Activated T-helper 1 cell treated with anti-CD3 and anti-CD28 coated beads, Interleukin-12 subunit alpha, Interleukin-12 subunit beta, Interleukin-2, Interleukin-4 antibody, amounts not matched to agents 30 ng/mL and 10 ng/mL and 1 ng/mL, durations not matched to agents 14 hours and 24 hours and 36 hours (primary cell): ENCODE measurements at regions of chr6 and their contacts with region 1.

Region 1: DNA sequence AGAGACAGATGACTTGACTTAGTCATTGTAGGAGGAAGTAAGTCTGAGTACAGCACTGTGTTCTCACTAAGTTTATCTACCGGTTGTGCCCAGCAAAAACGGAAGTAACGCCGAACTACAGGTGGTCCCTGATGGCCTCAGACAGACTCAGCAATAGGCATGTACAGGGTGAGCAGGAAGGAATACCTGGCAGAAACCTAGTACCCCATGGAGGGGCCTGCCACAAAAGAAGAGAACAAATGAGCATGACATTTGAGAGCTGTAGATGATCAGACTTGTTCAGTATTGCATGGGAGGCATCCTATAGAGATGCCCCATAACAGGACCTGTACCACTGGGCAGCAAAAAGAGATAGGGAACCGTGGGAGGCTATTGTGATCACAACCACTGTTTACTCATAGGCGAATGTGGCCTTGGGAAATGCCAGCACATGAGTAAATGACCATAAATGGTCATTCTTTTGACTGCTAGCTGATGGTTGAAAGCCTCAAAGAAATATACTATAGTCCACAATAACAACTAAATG is 106.4 kb upstream of the TAB2 start:
- DNase-seq: no peak
- H3K4me3 Mint-ChIP-seq: no peak overlapping the region
- H3K27ac Mint-ChIP-seq: no peak overlapping the region
- H3K4me1 Mint-ChIP-seq: peaks cover 4% of the 10 kb centered on the region
- H3K27me3 Mint-ChIP-seq: no peaks in the 10 kb centered on the region

Region 2: GRCh38 chr6:148271711-148272439 is 939.2 kb before region 1 on chr6:
- intact Hi-C with region 1: no loop called
- DNase-seq: no peak
- H3K4me3 Mint-ChIP-seq: no peak overlapping the region
- H3K27ac Mint-ChIP-seq: no peak overlapping the region
- H3K4me1 Mint-ChIP-seq: no peaks in the 10 kb centered on the region
- H3K27me3 Mint-ChIP-seq: no peaks in the 10 kb centered on the region

Region 3: DNA sequence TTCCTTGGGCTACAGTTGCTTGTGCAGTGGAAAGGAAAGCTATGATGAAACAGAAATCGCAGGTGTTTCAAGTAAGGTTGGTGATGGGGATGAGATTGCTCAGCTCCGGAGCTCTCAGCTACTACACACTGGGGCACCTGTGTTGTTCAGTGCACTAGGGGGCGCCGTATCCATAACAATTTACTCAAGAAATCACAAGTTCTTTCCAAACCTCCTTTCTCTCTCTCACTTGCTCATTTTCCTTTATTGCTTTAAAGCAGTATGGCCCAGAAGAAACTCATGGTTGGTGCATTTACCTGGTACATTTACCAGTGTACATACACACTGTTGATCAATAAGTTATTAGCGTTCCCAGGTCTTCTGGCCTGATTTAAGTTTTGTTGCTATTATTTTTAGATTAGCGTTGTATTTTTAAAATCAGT is 128.8 kb before region 1 on chr6:
- intact Hi-C with region 1: loop called (anchors 1 kb)
- DNase-seq: peak; percentile 81
- H3K4me3 Mint-ChIP-seq: peak overlapping the region; percentile 80
- H3K27ac Mint-ChIP-seq: peak overlapping the region; percentile 92
- H3K4me1 Mint-ChIP-seq: peaks cover 89% of the 10 kb centered on the region
- H3K27me3 Mint-ChIP-seq: no peaks in the 10 kb centered on the region

Region 4: GRCh38 chr6:149147938-149148718 is 63.0 kb before region 1 on chr6:
- intact Hi-C with region 1: loop called (anchors 1 kb)
- DNase-seq: peak; percentile 49
- H3K4me3 Mint-ChIP-seq: peak overlapping the region; percentile 34
- H3K27ac Mint-ChIP-seq: peak overlapping the region; percentile 96
- H3K4me1 Mint-ChIP-seq: peaks cover 89% of the 10 kb centered on the region
- H3K27me3 Mint-ChIP-seq: no peaks in the 10 kb centered on the region

Region 5: GRCh38 chr6:149235130-149235561 is 24.0 kb after region 1 on chr6:
- intact Hi-C with region 1: loop called (anchors 1 kb)
- DNase-seq: no peak
- H3K4me3 Mint-ChIP-seq: peak overlapping the region; percentile 75
- H3K27ac Mint-ChIP-seq: peak overlapping the region; percentile 97
- H3K4me1 Mint-ChIP-seq: peaks cover 71% of the 10 kb centered on the region
- H3K27me3 Mint-ChIP-seq: no peaks in the 10 kb centered on the region

Region 6: DNA sequence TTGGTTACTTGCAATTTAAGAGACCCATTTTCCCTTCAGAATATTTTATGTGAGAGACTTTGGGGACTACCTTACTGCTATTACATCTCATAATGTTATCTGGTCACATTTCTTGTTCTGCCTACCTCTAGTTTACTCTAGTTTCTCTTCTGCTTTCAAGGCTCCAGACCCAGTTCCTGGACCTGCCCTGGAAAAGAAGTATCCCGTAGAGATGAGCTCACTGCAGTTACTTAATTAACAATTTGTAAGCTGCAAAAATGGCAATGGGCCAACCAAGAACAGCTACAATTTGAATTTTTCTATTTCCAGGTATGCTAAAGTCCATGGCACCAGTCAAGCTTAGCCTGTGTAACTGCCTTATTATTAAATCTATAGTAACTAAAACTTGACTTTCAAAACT is 131.4 kb after region 1 on chr6:
- intact Hi-C with region 1: loop called (anchors 2 kb)
- DNase-seq: no peak
- H3K4me3 Mint-ChIP-seq: peak overlapping the region; percentile 59
- H3K27ac Mint-ChIP-seq: peak overlapping the region; percentile 83
- H3K4me1 Mint-ChIP-seq: peaks cover 88% of the 10 kb centered on the region
- H3K27me3 Mint-ChIP-seq: no peaks in the 10 kb centered on the region

Region 7: GRCh38 chr6:149513915-149514314 is 302.8 kb after region 1 on chr6:
- intact Hi-C with region 1: loop called (anchors 2 kb)
- DNase-seq: no peak
- H3K4me3 Mint-ChIP-seq: no peak overlapping the region
- H3K27ac Mint-ChIP-seq: no peak overlapping the region
- H3K4me1 Mint-ChIP-seq: peaks cover 47% of the 10 kb centered on the region
- H3K27me3 Mint-ChIP-seq: no peaks in the 10 kb centered on the region